CD8-positive, alpha-beta T cell (primary cell): ENCODE measurements at regions of chr19 and their contacts with region 1.

Region 1: GRCh38 chr19:3275583-3276340 is 51.3 kb downstream of the CELF5 start:
- DNase-seq: peak; percentile 84 to 98 (median 93)
- ATAC-seq: peak; percentile 79
- H3K4me3 ChIP-seq: peak overlapping the region; percentile 59 to 84
- H3K4me3 Mint-ChIP-seq: peak overlapping the region; percentile 86
- H3K27ac ChIP-seq: peak overlapping the region; percentile 34 to 63
- H3K27ac Mint-ChIP-seq: peak overlapping the region; percentile 70
- H3K4me1 ChIP-seq: peaks cover 18% of the 10 kb centered on the region
- H3K4me1 Mint-ChIP-seq: peaks cover 17% of the 10 kb centered on the region
- H3K27me3 ChIP-seq: peaks cover 0 to 2% of the 10 kb centered on the region in 2 experiments
- H3K27me3 Mint-ChIP-seq: peaks cover 6% of the 10 kb centered on the region
- CTCF ChIP-seq: peak; percentile 14

Region 2: DNA sequence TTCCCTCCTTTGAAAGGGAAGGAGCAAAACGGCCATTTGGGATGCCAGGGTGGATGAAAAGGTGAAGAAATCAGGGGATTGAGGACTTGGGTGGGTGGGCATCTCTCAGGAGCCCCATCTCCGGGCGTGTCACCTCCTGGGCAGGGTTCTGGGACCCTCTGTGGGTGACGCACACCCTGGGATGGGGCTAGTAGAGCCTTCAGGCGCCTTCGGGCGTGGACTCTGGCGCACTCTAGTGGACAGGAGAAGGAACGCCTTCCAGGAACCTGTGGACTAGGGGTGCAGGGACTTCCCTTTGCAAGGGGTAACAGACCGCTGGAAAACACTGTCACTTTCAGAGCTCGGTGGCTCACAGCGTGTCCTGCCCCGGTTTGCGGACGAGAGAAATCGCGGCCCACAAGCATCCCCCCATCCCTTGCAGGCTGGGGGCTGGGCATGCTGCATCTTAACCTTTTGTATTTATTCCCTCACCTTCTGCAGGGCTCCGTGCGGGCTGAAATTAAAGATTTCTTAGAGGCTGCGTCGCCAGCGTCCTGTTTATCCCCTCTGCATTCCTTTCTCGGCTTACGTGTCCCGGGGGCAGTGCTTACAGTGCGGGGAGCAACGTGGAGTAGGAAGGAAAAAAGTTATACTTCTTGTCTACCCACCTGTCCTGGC is 112.4 kb before region 1 on chr19:
- CTCF ChIA-PET with region 1: no interaction called
- POLR2A ChIA-PET with region 1: no interaction called
- intact Hi-C with region 1: no loop called
- DNase-seq: peak; percentile 46 to 85 (median 75)
- ATAC-seq: peak; percentile 97
- H3K4me3 ChIP-seq: no peak overlapping the region
- H3K4me3 Mint-ChIP-seq: no peak overlapping the region
- H3K27ac ChIP-seq: no peak overlapping the region
- H3K27ac Mint-ChIP-seq: peak overlapping the region; percentile 14
- H3K4me1 ChIP-seq: no peaks in the 10 kb centered on the region
- H3K4me1 Mint-ChIP-seq: peaks cover 14% of the 10 kb centered on the region
- H3K27me3 ChIP-seq: no peaks in the 10 kb centered on the region
- H3K27me3 Mint-ChIP-seq: no peaks in the 10 kb centered on the region
- CTCF ChIP-seq: peak; percentile 89

Region 3: GRCh38 chr19:3224346-3225168 is 51.2 kb before region 1 on chr19 and contains the start of gene CELF5:
- CTCF ChIA-PET with region 1: no interaction called
- POLR2A ChIA-PET with region 1: no interaction called
- intact Hi-C with region 1: loop called in 1 of 2 experiments (anchors 5 kb)
- DNase-seq: peak; percentile 19 to 77 (median 58)
- ATAC-seq: peak; percentile 84
- H3K4me3 ChIP-seq: no peak within 1 kb of the TSS
- H3K4me3 Mint-ChIP-seq: peak within 1 kb of the TSS; percentile 55
- H3K27ac ChIP-seq: no peak within 1 kb of the TSS
- H3K27ac Mint-ChIP-seq: no peak within 1 kb of the TSS
- H3K4me1 ChIP-seq: peaks cover 2% of the 10 kb centered on the region
- H3K4me1 Mint-ChIP-seq: peaks cover 1% of the 10 kb centered on the region
- H3K27me3 ChIP-seq: peaks cover 0 to 3% of the 10 kb centered on the region in 2 experiments
- H3K27me3 Mint-ChIP-seq: peaks cover 17% of the 10 kb centered on the region
- CTCF ChIP-seq: peak; percentile 29
- total RNA-seq, gene CELF5: 0.84 TPM in 1 of 2 experiments, not detected in the other

Region 4: GRCh38 chr19:3251229-3251628 is 24.5 kb before region 1 on chr19:
- CTCF ChIA-PET with region 1: no interaction called
- POLR2A ChIA-PET with region 1: no interaction called
- intact Hi-C with region 1: no loop called
- DNase-seq: no peak
- ATAC-seq: no peak
- H3K4me3 ChIP-seq: no peak overlapping the region
- H3K4me3 Mint-ChIP-seq: no peak overlapping the region
- H3K27ac ChIP-seq: no peak overlapping the region
- H3K27ac Mint-ChIP-seq: no peak overlapping the region
- H3K4me1 ChIP-seq: no peaks in the 10 kb centered on the region
- H3K4me1 Mint-ChIP-seq: no peaks in the 10 kb centered on the region
- H3K27me3 ChIP-seq: peaks cover 0 to 3% of the 10 kb centered on the region in 2 experiments
- H3K27me3 Mint-ChIP-seq: peaks cover 16% of the 10 kb centered on the region
- CTCF ChIP-seq: no peak

Region 5: GRCh38 chr19:3360421-3361383 is 84.9 kb after region 1 on chr19:
- CTCF ChIA-PET with region 1: no interaction called
- POLR2A ChIA-PET with region 1: no interaction called
- intact Hi-C with region 1: loop called in 1 of 2 experiments (anchors 5 kb)
- DNase-seq: peak; percentile 35 to 90 (median 74)
- ATAC-seq: peak; percentile 55
- H3K4me3 ChIP-seq: peak overlapping the region; percentile 66 to 69
- H3K4me3 Mint-ChIP-seq: peak overlapping the region; percentile 90
- H3K27ac ChIP-seq: peak overlapping the region; percentile 38 to 63
- H3K27ac Mint-ChIP-seq: peak overlapping the region; percentile 91
- H3K4me1 ChIP-seq: peaks cover 31% of the 10 kb centered on the region
- H3K4me1 Mint-ChIP-seq: peaks cover 57% of the 10 kb centered on the region
- H3K27me3 ChIP-seq: no peaks in the 10 kb centered on the region
- H3K27me3 Mint-ChIP-seq: no peaks in the 10 kb centered on the region
- CTCF ChIP-seq: no peak

Region 6: GRCh38 chr19:4328243-4328990 is 1052.7 kb after region 1 on chr19:
- CTCF ChIA-PET with region 1: no interaction called
- POLR2A ChIA-PET with region 1: no interaction called
- intact Hi-C with region 1: loop called in 1 of 2 experiments (anchors 10 kb)
- DNase-seq: peak; percentile 84 to 99 (median 97)
- ATAC-seq: peak; percentile 95
- H3K4me3 ChIP-seq: peak overlapping the region; percentile 53 to 81
- H3K4me3 Mint-ChIP-seq: peak overlapping the region; percentile 80
- H3K27ac ChIP-seq: peak overlapping the region in 1 of 2 experiments; percentile 55
- H3K27ac Mint-ChIP-seq: peak overlapping the region; percentile 92
- H3K4me1 ChIP-seq: peaks cover 20% of the 10 kb centered on the region
- H3K4me1 Mint-ChIP-seq: peaks cover 27% of the 10 kb centered on the region
- H3K27me3 ChIP-seq: no peaks in the 10 kb centered on the region
- H3K27me3 Mint-ChIP-seq: no peaks in the 10 kb centered on the region
- CTCF ChIP-seq: no peak